ENCODE measurements at regions of chr4 and their contacts with region 1.

Region 1: DNA sequence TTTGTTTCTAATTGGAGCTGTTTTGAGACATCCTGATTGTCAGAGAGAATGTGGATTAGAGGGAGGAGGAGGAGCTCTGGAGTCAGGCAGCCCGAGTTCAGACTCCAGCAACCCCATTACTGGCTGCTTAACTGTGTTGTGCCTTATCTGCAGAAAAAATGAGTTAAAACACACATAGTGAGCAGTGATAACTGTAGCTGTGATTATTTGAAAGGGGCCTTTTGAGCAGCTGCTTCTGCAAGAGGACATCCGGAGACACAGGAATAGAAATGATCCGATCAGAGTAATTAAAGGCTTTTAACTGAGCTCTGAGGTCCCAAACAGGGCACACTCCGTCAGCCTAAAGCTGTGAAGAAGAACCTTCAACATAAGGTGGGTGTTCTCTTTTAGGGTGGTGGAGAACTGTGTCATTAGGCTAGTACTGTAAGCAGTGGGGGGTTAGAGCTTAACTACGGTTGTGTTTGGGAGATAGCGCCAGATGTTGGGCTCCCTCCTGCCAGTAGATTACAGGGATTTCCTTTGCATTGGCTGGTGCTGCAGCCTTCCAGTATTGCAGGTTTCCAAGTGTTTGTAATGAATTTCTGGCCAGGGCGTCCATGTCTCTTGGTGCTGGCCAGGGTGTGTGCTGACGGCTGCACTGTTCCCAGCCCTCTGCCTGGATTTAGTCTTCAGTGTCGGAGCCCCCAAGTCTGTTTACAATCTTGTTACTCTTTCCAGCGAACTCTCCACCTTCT is 24.3 kb downstream of the ADD1 start:
- DNase-seq: no peak
- ATAC-seq: no peak
- H3K4me3 ChIP-seq: no peak overlapping the region
- H3K4me3 Mint-ChIP-seq: no peak overlapping the region
- H3K27ac ChIP-seq: no peak overlapping the region
- H3K27ac Mint-ChIP-seq: peak overlapping the region in 1 of 2 donors; percentile 60
- H3K4me1 ChIP-seq: peaks cover 8 to 9% of the 10 kb centered on the region in 2 experiments
- H3K4me1 Mint-ChIP-seq: peaks cover 78 to 84% (median 83%) of the 10 kb centered on the region in 3 donors
- H3K27me3 ChIP-seq: no peaks in the 10 kb centered on the region
- H3K27me3 Mint-ChIP-seq: no peaks in the 10 kb centered on the region

Region 2: DNA sequence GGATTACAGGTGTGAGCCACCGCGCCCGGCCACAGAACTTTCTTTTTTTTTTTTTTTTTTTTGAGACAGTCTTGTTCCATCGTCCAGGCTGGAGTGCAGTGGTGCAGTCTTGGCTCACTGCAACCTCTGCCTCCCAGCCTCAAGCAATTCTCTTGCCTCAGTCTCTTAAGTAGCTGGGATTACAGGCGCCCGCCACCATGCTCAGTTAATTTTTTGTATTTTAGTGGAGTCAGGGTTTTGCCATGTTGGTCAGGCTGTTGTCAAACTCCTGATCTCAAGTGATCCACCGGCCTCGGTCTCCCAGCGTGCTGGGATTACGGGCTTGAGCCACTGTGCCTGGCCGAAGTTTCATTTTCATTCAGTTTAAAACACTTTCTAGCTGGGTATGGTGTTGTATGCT is 315.1 kb before region 1 on chr4:
- CTCF ChIA-PET with region 1: no interaction called
- POLR2A ChIA-PET with region 1: interaction called in 1 of 2 experiments, 10 read pairs
- DNase-seq: no peak
- ATAC-seq: no peak
- H3K4me3 ChIP-seq: no peak overlapping the region
- H3K4me3 Mint-ChIP-seq: no peak overlapping the region
- H3K27ac ChIP-seq: no peak overlapping the region
- H3K27ac Mint-ChIP-seq: no peak overlapping the region
- H3K4me1 ChIP-seq: peaks cover 0 to 16% of the 10 kb centered on the region in 2 experiments
- H3K4me1 Mint-ChIP-seq: peaks cover 29 to 61% (median 56%) of the 10 kb centered on the region in 3 donors
- H3K27me3 ChIP-seq: no peaks in the 10 kb centered on the region
- H3K27me3 Mint-ChIP-seq: no peaks in the 10 kb centered on the region